Heart left ventricle (tissue), 16 donors: ENCODE measurements at regions of chr16 and their contacts with region 1.

Region 1: DNA sequence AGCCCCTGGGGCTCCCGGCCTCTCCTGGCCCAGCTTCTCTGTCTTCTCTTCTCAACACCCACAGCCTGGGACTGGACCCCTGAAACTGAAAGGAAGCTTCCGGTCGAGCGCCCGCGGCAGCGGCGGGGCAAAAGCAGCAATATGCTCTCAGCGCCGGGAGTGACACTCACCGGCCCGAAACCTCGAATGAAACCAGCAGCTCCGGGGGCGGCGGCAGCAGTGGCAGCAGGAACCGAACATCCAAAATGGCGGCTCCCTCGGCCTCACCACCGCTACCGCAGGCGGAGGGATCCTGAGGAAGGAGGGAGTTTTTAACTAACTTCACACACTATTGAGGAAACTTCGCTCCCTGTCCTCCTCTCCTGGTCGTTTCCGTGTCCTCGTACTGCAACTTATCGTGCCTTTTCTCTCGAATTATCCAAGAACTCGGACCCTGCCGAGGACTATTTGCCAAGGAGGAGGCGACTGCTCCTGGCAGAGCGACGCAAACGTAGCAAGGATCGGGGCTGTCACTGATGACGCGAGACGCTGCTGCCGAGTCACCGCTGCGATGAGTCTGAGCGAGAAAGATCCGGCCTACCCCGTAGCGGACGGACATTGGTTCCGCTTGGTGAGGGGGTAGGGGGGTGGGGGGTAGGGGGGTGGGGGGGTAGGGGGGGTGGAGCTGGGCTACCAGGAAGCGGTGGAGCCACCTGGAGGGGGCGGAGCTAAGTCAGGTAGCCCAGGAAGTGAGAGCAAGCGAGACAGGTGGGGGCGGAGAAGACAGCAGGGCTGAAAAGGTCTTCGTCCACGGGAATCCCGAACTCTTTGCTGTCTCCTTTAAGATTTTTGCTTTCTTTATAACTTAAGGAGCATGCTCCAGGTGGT is at the start of gene AP1G1:
- DNase-seq: peak; percentile 96 to 98 (median 96)
- ATAC-seq: peak; percentile 98 to 99 (median 99)
- H3K4me3 ChIP-seq: peak within 1 kb of the TSS; percentile 75 to 100 (median 88)
- H3K27ac ChIP-seq: peak within 1 kb of the TSS; percentile 91 to 100 (median 97)
- H3K4me1 ChIP-seq: peaks cover 4 to 36% (median 31%) of the 10 kb centered on the region in 12 donors
- H3K27me3 ChIP-seq: no peaks in the 10 kb centered on the region
- CTCF ChIP-seq: peak in 1 of 12 donors; percentile 19
- POLR2A ChIP-seq: peak in 1 of 2 donors; percentile 31
- total RNA-seq, gene AP1G1: 32.1 to 60.5 (median 37.1) TPM

Region 2: GRCh38 chr16:71845639-71846430 is 37.0 kb after region 1 on chr16 and contains the start of gene ATXN1L:
- intact Hi-C with region 1: loop called in 7 of 10 experiments (anchors 1 to 5 kb)
- DNase-seq: peak; percentile 91 to 95 (median 93)
- ATAC-seq: peak; percentile 95 to 98 (median 97)
- H3K4me3 ChIP-seq: peak within 1 kb of the TSS; percentile 72 to 100 (median 92)
- H3K27ac ChIP-seq: peak within 1 kb of the TSS; percentile 57 to 97 (median 90)
- H3K4me1 ChIP-seq: peaks cover 0 to 38% (median 17%) of the 10 kb centered on the region in 12 donors
- H3K27me3 ChIP-seq: no peaks in the 10 kb centered on the region
- CTCF ChIP-seq: peak in 4 of 12 donors; percentile 7 to 30 (median 22)
- POLR2A ChIP-seq: peak; percentile 45 to 85
- total RNA-seq, gene ATXN1L: 14.3 to 24.2 (median 19.8) TPM